Left ventricle myocardium superior (tissue), 1 donor: ENCODE measurements at regions of chr10 and their contacts with region 1.

Region 1: DNA sequence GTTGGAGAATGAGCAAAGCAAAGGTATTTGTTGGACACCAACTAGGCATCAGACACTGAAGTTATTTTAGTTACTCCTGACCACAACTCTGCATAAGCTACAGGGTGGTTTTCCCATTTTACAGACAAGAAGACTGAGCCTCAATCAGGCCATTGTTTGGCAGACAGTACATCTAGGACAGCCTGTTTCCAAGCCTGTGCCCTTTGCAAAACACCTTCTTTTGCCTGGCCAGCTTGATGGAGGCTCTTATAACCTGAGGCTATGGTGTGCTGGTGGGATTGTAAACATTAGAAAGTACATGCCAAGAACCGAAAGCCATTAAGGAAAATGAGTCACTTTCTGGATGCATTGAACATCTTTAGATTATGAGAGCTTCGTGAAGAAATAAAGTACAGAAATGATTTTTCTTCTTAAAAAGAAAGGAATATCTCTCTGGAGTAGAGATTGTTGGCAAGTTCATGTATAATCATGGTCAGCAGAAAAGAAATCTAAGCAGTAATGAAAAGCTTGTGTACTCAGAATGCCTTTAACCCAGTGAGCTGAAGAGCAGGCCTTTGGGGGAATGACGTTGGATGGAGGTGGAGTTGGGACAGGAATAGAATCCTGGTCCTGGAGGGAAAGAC is 140.6 kb downstream of the KIAA1217 start:
- DNase-seq: no peak
- ATAC-seq: peak; percentile 59

Region 2: GRCh38 chr10:24132741-24133140 is 216.7 kb before region 1 on chr10:
- intact Hi-C with region 1: no loop called
- DNase-seq: no peak
- ATAC-seq: no peak

Region 3: DNA sequence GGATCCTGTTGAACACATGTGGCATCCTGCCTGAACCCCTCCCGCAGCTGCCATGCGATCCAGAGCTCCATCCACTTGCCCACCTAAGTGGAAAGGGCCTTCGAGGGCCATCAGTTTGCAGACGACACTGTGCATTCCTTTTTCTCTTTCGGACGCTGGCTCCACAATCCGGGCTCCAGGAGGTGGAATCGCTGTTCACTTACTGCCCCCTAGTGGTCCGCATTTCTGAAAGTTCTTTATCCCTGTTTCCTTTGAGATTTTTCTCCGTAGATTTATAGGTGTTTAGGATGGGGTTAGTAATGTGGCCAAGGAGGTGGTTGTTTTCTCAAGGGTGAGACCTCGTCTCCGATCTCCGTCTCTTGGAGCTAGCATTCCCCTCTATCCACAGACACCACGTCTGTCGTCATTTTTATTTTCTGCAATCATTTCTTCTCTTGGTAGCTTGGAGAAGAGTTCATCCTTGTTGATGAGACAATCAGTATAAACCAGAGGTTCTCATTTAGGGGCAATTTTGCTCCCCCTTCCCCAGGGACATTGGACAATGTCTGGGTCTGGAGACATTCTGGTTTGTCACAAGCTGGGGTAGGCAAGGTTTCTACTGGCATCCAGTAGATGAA is 169.6 kb after region 1 on chr10:
- intact Hi-C with region 1: loop called (anchors 10 kb)
- DNase-seq: peak; percentile 36
- ATAC-seq: peak; percentile 73